MCF 10A (cell line): ENCODE measurements at regions of chr7 and their contacts with region 1.

Region 1: GRCh38 chr7:55173671-55174070 is 154.9 kb downstream of the EGFR start:
- DNase-seq: no peak
- H3K4me3 Mint-ChIP-seq: no peak overlapping the region
- H3K27ac Mint-ChIP-seq: no peak overlapping the region
- H3K4me1 Mint-ChIP-seq: peaks cover 6% of the 10 kb centered on the region
- H3K27me3 Mint-ChIP-seq: no peaks in the 10 kb centered on the region
- CTCF ChIP-seq: no peak

Region 2: DNA sequence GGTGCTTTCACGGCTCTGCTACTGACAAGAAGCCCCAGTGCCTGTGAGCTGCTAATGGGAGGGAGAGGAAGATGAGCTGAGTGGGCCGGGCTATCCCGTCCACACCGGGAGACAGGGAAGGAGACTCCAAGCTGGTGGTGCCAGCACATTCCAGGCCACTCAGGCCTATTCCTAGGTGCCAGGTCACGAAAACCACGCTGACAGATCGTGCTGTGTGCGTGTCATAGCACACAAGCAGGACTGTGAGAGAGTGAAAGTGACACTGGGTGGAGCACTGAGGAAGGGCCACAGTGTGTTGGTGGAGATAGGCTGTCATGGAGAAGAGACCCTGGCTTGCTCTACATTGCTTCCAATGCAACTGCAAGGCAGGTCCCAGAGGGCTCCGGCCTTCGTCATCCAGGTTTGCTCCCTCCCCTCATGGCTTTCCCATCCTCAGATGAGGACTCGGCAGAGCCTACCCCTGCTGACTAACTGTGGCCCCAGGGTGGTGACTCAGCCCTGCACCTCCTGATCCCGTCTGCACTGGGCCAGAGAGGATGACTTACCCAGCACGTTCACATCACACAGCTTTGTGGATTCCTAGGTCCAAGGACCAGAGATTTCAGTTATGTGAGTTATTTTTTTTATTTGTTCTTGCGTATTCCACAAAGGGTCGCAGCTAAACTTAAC is 12.4 kb after region 1 on chr7:
- CTCF ChIA-PET with region 1: no interaction called
- POLR2A ChIA-PET with region 1: interaction called, 10 read pairs
- intact Hi-C with region 1: no loop called
- DNase-seq: peak; percentile 97
- H3K4me3 Mint-ChIP-seq: no peak overlapping the region
- H3K27ac Mint-ChIP-seq: peak overlapping the region; percentile 79
- H3K4me1 Mint-ChIP-seq: peaks cover 29% of the 10 kb centered on the region
- H3K27me3 Mint-ChIP-seq: no peaks in the 10 kb centered on the region
- CTCF ChIP-seq: no peak